ENCODE measurements at regions of chr14 and their contacts with region 1.

Region 1: GRCh38 chr14:63203618-63204406 is 431 bp upstream of the RHOJ start:
- DNase-seq: peak; percentile 81 to 84
- ATAC-seq: peak; percentile 92
- H3K4me3 ChIP-seq: peak overlapping the region; percentile 19 to 75
- H3K27ac ChIP-seq: peak overlapping the region; percentile 68 to 98
- H3K4me1 ChIP-seq: peaks cover 0 to 3% of the 10 kb centered on the region in 2 donors
- H3K27me3 ChIP-seq: no peaks in the 10 kb centered on the region

Region 2: DNA sequence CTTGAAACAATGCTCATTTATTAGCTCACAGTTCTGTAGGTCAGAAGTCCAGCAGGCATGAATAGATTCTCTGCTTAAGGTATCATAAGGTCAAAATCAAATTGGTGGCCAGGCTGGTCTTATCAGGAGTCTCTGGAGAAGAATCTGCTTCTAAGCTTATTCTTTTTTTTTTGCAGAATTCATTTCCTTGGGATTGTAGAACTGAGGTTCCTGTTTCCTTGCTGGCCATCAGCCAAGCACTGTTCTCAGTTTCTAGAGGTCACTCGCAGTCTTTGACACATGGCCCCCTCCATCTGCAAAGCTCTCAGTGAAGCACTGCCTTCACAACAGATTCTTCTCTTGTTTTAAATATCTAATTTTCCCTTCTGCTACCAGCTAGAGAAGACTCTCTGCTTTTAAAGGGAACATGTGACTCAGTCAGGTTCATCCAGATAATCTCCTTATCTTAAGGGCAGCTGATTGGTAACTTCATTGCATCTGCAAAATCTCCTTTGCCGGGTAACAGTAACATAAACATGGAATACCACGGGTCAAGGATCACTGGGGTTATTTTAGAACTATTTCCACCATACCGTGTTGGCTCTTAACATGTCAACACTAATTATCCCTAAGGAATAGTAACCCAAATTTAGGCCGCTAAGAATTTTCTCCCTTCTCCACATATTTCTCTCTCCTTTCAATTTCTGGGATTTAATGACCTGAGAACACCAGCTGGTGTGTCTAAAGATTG is 25.7 kb after region 1 on chr14:
- intact Hi-C with region 1: no loop called
- DNase-seq: no peak
- ATAC-seq: no peak
- H3K4me3 ChIP-seq: no peak overlapping the region
- H3K27ac ChIP-seq: no peak overlapping the region
- H3K4me1 ChIP-seq: no peaks in the 10 kb centered on the region
- H3K27me3 ChIP-seq: no peaks in the 10 kb centered on the region

Region 3: DNA sequence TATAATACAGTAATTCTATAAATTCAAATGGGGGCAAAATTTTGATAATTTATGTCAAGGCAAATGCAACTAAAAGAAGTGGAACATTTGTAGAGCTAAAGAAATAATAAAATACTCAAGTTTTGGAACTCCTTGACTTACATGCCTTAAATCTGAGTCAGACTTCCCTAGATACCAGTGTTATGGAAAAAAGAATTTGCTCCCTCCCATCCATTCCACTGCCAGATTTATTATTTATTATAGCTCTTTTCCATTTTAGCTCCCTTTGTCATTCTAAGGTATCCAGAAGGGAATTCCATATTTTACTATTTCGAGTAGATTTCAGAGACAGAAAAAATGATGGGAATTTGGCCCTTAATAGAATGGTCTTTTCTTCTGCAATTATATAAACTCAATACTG is 44.4 kb after region 1 on chr14:
- intact Hi-C with region 1: loop called (anchors 2 to 5 kb)
- DNase-seq: no peak
- ATAC-seq: peak; percentile 86
- H3K4me3 ChIP-seq: no peak overlapping the region
- H3K27ac ChIP-seq: no peak overlapping the region
- H3K4me1 ChIP-seq: peaks cover 4 to 11% of the 10 kb centered on the region in 2 donors
- H3K27me3 ChIP-seq: no peaks in the 10 kb centered on the region